ENCODE measurements at regions of chr3 and their contacts with region 1.

Region 1: GRCh38 chr3:8987645-8988383 is 24.5 kb upstream of the RAD18 start:
- DNase-seq: peak in 1 of 2 donors; percentile 64
- H3K4me3 ChIP-seq: no peak overlapping the region
- H3K27ac ChIP-seq: no peak overlapping the region
- H3K4me1 ChIP-seq: no peaks in the 10 kb centered on the region
- H3K27me3 ChIP-seq: no peaks in the 10 kb centered on the region
- CTCF ChIP-seq: peak; percentile 20 to 57 (median 52)
- POLR2A ChIP-seq: no peak

Region 2: GRCh38 chr3:7567160-7567559 is 1420.7 kb before region 1 on chr3:
- intact Hi-C with region 1: no loop called
- DNase-seq: no peak
- H3K4me3 ChIP-seq: no peak overlapping the region
- H3K27ac ChIP-seq: no peak overlapping the region
- H3K4me1 ChIP-seq: no peaks in the 10 kb centered on the region
- H3K27me3 ChIP-seq: no peaks in the 10 kb centered on the region
- CTCF ChIP-seq: no peak
- POLR2A ChIP-seq: no peak

Region 3: GRCh38 chr3:8800016-8800415 is 187.8 kb before region 1 on chr3:
- intact Hi-C with region 1: no loop called
- DNase-seq: no peak
- H3K4me3 ChIP-seq: no peak overlapping the region
- H3K27ac ChIP-seq: no peak overlapping the region
- H3K4me1 ChIP-seq: no peaks in the 10 kb centered on the region
- H3K27me3 ChIP-seq: no peaks in the 10 kb centered on the region
- CTCF ChIP-seq: no peak
- POLR2A ChIP-seq: no peak

Region 4: GRCh38 chr3:9201266-9201665 is 213.5 kb after region 1 on chr3:
- intact Hi-C with region 1: no loop called
- DNase-seq: no peak
- H3K4me3 ChIP-seq: no peak overlapping the region
- H3K27ac ChIP-seq: no peak overlapping the region
- H3K4me1 ChIP-seq: no peaks in the 10 kb centered on the region
- H3K27me3 ChIP-seq: no peaks in the 10 kb centered on the region
- CTCF ChIP-seq: no peak
- POLR2A ChIP-seq: no peak

Region 5: GRCh38 chr3:9302425-9303181 is 314.8 kb after region 1 on chr3:
- intact Hi-C with region 1: loop called (anchors 5 kb)
- DNase-seq: no peak
- H3K4me3 ChIP-seq: peak overlapping the region; percentile 14 to 34
- H3K27ac ChIP-seq: no peak overlapping the region
- H3K4me1 ChIP-seq: peaks cover 5% of the 10 kb centered on the region
- H3K27me3 ChIP-seq: no peaks in the 10 kb centered on the region
- CTCF ChIP-seq: peak; percentile 85 to 91 (median 87)
- POLR2A ChIP-seq: no peak